Heart left ventricle (tissue), 16 donors: ENCODE measurements at regions of chr20 and their contacts with region 1.

Region 1: DNA sequence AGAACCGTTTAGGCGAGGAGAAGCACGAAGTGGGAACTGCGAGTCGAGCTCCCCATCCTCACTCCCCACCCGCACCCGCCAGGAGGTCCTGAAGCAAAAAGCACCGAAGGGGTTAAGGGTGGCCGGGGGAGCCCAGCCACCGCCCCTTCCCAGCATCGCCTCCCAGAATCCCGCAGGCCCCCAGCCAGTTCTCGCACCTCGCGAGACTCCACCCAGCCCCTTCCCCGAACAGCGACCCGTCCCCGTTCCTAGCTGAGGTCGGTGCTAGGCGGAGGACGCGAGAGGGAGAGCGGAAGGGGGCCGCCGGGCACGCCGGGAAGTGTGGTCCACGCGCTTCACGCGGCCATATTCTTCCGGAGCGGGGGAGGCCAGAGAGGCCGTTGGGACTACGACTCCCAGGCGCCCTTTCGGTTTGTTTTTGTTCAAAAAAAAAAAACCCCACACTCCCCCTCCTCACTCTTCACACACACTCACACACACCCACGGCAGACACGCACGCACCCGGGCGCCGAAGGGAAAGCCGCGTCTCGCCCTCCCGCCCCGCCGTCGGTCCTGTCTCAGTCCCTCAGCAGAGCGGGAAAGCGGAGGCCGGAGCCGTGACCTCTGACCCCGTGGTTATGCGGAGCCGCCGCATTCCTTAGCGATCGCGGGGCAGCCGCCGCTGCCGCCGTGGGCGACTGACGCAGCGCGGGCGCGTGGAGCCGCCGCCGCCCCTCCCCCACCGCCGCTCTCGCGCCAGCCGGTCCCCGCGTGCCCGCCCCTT is at the start of gene ASXL1:
- DNase-seq: peak; percentile 98 to 99 (median 99)
- ATAC-seq: peak; percentile 97 to 98 (median 98)
- H3K4me3 ChIP-seq: peak within 1 kb of the TSS; percentile 64 to 97 (median 82)
- H3K27ac ChIP-seq: peak within 1 kb of the TSS; percentile 95 to 100 (median 98)
- H3K4me1 ChIP-seq: peaks cover 0 to 65% (median 23%) of the 10 kb centered on the region in 12 donors
- H3K27me3 ChIP-seq: no peaks in the 10 kb centered on the region
- CTCF ChIP-seq: peak in 3 of 12 donors; percentile 4 to 14 (median 11)
- POLR2A ChIP-seq: peak in 1 of 2 donors; percentile 69
- total RNA-seq, gene ASXL1: 16.8 to 50.1 (median 27.1) TPM

Region 2: DNA sequence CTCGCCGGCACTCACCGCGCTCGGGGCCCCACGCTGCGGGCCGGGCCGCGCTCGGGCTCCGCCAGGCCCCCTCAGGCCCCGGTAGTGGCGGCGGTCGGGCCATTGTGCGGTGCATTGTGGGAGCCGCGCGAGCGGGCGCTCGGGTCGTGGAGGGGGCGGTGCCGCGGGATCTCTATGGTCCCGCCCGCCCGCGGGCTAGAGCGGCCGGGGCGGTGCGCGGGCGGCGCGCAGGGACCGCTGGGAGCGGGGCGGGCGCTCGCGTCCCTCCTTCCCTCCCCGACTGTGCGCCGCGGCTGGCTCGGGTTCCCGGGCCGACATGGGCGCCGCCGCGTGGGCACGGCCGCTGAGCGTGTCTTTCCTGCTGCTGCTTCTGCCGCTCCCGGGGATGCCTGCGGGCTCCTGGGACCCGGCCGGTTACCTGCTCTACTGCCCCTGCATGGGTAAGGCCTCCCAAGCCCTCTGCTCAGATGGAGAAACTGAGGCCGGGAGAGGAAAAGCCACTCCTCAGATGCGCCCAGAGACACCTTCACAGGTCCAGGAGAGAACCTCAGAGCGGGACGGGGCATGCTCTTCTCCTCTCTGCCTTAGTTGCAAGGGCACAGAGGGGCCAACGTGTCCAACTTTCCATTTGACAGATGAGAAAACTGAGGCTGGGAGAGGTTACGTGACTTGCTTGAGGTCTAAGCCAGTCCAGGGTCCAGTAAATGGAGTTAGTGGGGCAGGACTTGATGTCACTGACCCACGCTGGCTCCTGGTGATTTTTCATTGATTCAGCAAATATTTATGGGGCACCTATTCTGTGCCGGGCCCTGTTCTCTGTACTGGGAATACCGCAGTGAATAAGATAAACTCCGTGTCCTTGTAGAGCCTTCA is 150.2 kb before region 1 on chr20 and contains the starts of genes PLAGL2 and POFUT1:
- intact Hi-C with region 1: loop called in 3 of 10 experiments (anchors 1 to 10 kb)
- DNase-seq: peak; percentile 90 to 95 (median 93)
- ATAC-seq: peak; percentile 84 to 98 (median 96)
- H3K4me3 ChIP-seq: peak within 1 kb of the TSS; percentile 70 to 99 (median 96)
- H3K27ac ChIP-seq: peak within 1 kb of the TSS; percentile 85 to 99 (median 93)
- H3K4me1 ChIP-seq: peaks cover 10 to 57% (median 45%) of the 10 kb centered on the region in 12 donors
- H3K27me3 ChIP-seq: no peaks in the 10 kb centered on the region
- CTCF ChIP-seq: peak in 8 of 12 donors; percentile 26 to 46 (median 32)
- POLR2A ChIP-seq: peak in 1 of 2 donors; percentile 81
- total RNA-seq, gene PLAGL2: 4.4 to 9.9 (median 7.8) TPM
- total RNA-seq, gene POFUT1: 26.0 to 48.5 (median 27.5) TPM

Region 3: DNA sequence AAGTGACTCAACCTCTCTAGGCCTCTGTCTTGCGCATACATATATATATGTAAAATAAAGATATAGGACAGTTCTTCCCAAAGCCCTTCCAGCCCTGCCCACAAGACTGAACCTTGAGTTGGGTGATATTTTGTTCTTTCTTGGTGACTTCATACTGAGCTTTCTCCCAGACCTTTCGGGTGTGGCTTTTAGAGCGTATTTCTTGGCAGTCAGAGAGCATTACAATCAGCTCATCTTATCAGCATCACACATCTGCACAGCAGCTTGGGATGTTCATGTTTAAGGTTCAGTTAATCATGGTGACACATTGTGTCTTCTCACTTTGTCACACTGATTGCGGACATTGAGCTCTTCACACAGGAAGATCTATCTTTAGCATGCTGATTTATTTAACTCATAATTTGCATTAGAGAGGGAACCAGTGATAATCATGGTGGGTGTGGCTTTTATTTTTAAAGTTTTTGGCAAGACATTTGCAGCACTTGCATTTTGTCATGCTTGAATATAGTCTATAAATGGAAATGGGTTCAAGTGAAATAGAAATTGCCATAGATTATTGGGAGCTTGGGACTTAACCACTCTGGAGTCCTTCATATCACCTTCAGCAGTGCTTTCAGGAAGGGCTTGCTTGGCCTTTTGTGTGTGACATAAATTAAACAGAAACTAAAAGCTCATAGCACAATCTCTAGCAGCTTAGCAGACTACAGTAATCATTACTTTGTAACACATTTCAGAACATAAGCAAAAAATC is 72.3 kb before region 1 on chr20:
- intact Hi-C with region 1: loop called in 1 of 10 experiments (anchors 5 kb)
- DNase-seq: peak in 2 of 5 donors; percentile 13 to 20
- ATAC-seq: peak; percentile 62 to 84 (median 64)
- H3K4me3 ChIP-seq: peak overlapping the region in 4 of 12 donors; percentile 1 to 10 (median 9)
- H3K27ac ChIP-seq: peak overlapping the region in 11 of 12 donors; percentile 45 to 82 (median 61)
- H3K4me1 ChIP-seq: peaks cover 3 to 39% (median 26%) of the 10 kb centered on the region in 12 donors
- H3K27me3 ChIP-seq: no peaks in the 10 kb centered on the region
- CTCF ChIP-seq: no peak
- POLR2A ChIP-seq: no peak

Region 4: GRCh38 chr20:32429745-32430360 is 71.8 kb after region 1 on chr20:
- intact Hi-C with region 1: loop called in 3 of 10 experiments (anchors 5 to 10 kb)
- DNase-seq: no peak
- ATAC-seq: no peak
- H3K4me3 ChIP-seq: no peak overlapping the region
- H3K27ac ChIP-seq: no peak overlapping the region
- H3K4me1 ChIP-seq: peaks cover 4 to 29% (median 17%) of the 10 kb centered on the region in 12 donors
- H3K27me3 ChIP-seq: no peaks in the 10 kb centered on the region
- CTCF ChIP-seq: no peak
- POLR2A ChIP-seq: no peak

Region 5: DNA sequence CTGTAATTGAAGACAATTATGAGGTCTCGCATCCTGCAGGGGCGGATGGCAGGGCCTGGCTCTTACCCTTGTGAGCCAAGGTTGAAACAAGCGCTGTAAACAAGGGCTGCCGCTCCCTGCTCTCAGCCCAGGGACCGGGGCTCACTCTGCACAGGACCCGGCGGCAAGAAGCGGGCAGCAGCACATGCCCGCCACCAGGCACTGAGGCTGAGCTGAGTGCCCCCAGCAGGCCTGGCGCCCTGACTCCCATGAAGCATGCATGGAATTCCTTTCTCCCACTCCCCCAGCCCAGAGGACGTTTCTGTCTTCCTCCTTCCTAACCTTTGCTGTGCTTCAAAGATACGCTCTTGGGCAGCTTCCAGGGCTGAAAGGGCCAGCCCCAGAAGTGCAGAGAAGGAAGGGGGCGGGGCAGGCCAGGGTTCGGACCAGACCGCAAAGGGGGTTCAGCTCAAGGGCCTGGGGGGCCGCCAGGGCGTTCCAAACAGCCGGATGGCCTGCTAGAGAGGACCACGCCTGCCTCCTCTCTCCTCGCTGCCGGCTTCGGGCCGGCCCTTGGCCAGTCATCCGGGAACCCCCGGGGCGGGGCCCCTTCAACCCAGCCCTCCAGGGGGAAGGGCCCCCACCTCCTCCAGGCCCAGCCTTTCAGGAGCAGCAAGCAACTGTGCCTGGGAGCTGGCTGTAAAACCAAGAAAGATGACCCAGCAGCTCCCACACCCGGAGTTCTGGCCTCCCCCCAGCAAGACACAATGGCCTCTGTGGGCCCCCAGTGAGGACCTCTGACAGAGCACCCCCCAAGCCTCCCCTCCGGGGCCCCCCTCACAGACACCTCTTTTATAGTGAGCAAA is 117.1 kb after region 1 on chr20:
- intact Hi-C with region 1: loop called in 5 of 10 experiments (anchors 2 to 5 kb)
- DNase-seq: peak; percentile 93 to 95 (median 94)
- ATAC-seq: peak; percentile 90 to 95 (median 93)
- H3K4me3 ChIP-seq: peak overlapping the region in 11 of 12 donors; percentile 16 to 60 (median 44)
- H3K27ac ChIP-seq: peak overlapping the region; percentile 51 to 95 (median 81)
- H3K4me1 ChIP-seq: peaks cover 14 to 83% (median 58%) of the 10 kb centered on the region in 12 donors
- H3K27me3 ChIP-seq: no peaks in the 10 kb centered on the region
- CTCF ChIP-seq: no peak
- POLR2A ChIP-seq: peak in 1 of 2 donors; percentile 50